Lower leg skin (tissue), 4 donors: ENCODE measurements at regions of chr18 and their contacts with region 1.

Region 1: GRCh38 chr18:73258375-73259087 is 390.7 kb upstream of the NETO1 start:
- DNase-seq: no peak
- H3K4me3 ChIP-seq: no peak overlapping the region
- CTCF ChIP-seq: no peak
- POLR2A ChIP-seq: no peak

Region 2: DNA sequence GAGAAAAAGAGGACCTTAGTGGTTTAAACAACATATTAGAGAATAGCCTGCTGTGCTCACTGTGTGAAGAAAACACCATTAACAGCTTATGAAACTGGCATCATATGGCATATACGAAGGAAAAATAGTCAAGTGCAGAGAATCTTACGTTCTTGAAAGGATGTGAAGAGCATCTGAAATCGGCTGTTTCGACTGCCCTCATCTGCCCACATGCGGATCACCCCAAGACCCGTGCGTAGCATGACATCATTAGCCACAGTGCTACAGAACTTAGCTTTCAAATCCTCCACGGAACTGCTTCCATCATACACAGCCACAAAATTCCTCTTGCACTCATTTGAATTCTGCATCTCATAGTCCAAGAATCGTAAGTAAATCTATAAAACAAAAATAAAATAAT is 475.0 kb before region 1 on chr18:
- intact Hi-C with region 1: no loop called
- DNase-seq: no peak
- H3K4me3 ChIP-seq: no peak overlapping the region
- CTCF ChIP-seq: no peak
- POLR2A ChIP-seq: no peak

Region 3: GRCh38 chr18:73214967-73215366 is 43.6 kb before region 1 on chr18:
- intact Hi-C with region 1: no loop called
- DNase-seq: no peak
- H3K4me3 ChIP-seq: no peak overlapping the region
- CTCF ChIP-seq: no peak
- POLR2A ChIP-seq: no peak

Region 4: GRCh38 chr18:73283788-73284187 is 25.3 kb after region 1 on chr18:
- intact Hi-C with region 1: no loop called
- DNase-seq: no peak
- H3K4me3 ChIP-seq: no peak overlapping the region
- CTCF ChIP-seq: no peak
- POLR2A ChIP-seq: no peak

Region 5: DNA sequence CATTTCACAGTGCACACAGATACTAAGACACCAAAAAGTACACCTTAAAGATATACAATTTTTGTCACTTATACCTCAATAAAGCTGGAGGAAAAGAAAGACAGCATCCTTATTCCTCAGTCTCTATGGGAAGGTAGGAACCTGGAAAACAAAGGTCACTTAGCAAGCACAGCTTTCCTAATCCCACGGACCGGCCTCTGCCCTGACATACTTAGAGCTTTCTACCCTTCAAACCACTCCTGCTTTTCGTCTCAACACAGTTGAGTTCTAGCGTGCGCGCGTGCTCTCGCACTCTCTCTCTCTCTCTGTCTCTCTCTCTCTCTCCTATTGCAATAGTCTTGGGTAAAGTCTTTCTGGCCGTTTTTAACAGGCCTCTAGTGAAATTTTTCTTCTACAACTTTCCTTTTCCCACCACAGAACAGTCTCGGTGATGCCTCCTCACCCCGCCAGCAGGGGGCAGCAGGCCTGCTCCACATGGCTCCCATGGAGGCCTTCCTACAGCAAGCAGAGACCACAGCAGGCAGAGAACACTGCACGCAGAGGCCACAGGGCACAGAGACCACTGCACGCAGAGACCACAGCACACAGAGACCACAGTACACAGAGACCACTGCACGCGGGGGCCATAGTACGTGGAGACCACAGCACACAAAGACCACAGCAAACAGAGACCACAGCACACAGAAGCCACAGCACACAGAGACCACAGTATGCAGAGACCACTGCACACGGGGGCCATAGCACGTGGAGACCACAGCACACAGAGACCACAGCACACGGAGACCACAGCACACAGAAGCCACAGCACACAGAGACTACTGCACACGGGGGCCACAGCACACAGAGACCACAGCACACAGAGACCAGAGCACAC is 782.2 kb after region 1 on chr18:
- intact Hi-C with region 1: loop called (anchors 5 kb)
- DNase-seq: no peak
- H3K4me3 ChIP-seq: no peak overlapping the region
- CTCF ChIP-seq: no peak
- POLR2A ChIP-seq: no peak